ENCODE measurements at regions of chr2 and their contacts with region 1.

Region 1: DNA sequence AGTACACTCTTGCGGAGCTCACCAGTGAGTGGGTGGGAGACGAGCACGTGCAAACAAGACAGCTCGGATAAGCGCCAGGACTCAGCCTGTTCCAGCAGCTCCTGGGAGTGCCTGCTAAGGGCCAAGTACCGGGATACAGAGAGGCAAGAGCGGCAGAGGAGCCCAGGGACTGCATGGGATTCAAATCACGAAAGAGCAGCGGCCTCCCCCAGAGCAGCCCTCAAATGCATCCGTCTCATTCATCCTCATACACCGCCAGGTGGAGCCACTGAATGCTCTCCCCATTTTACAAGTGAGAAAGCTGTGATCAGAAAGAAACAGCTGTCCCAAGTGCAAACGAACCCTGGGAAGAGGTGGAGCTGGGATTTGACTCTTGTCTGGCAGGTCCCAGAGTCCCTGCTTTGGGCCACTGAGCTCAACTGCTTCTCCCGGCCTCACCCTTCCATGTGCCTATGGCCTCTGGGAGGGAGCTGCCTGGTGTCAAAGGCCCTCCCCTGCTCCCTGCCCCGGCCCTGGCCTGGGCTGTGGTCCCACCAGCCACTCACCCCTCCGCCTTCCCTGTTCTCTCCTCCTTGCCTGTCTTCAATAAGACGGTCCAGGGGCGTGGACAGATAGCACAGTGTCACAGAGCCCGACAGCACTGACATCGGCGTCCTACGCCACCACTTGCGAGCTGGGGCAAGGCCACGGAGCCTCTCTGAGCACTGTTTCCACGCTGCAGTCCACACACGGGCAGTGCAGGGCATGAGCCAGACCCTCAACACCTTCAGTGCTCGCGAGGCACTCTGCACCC is 72.8 kb upstream of the TAF1B start:
- DNase-seq: peak; percentile 80
- ATAC-seq: peak; percentile 56

Region 2: GRCh38 chr2:9474361-9474967 is 296.0 kb before region 1 on chr2 and contains the start of gene IAH1:
- intact Hi-C with region 1: loop called (anchors 10 kb)
- DNase-seq: peak; percentile 90
- ATAC-seq: peak; percentile 91
- total RNA-seq, gene IAH1: 85.9 TPM

Region 3: GRCh38 chr2:9555297-9556141 is 215.0 kb before region 1 on chr2 and contains the start of gene ADAM17:
- intact Hi-C with region 1: loop called (anchors 10 kb)
- DNase-seq: peak; percentile 100
- ATAC-seq: peak; percentile 98
- total RNA-seq, gene ADAM17: 13.5 TPM

Measured in Right ventricle myocardium inferior (tissue), 1 donor.